Calu3 (cell line): ENCODE measurements at regions of chr4 and their contacts with region 1.

Region 1: DNA sequence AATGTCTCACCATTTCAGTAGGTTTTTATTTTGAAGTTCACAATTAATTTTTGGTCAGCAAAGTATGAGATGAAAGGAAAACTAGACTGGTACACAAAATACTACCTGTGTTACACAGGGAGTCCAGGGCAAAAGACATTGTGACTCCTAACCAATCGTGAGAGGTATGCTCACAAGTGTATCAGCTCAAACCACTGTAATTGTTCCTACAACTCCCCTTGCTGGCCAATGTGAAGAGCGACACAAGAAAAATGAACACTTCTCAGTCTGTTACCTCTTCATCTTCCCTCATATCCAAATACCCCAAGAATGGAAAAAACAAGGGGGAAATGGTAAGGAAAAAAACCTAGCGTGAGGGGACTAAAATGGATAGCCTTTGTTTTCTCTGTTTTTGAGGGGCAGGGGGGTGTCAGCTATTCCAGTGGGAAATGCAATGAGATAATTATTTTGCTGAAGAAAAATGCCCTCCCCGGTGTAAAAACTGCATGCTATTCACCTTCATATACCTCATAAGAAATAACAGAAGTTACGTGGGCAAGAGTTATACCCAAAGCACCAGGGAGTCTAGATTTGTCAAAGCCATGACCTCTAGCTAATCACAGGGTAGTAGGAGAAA is 30.6 kb upstream of the NSUN7 start:
- DNase-seq: peak; percentile 27
- H3K4me3 Mint-ChIP-seq: no peak overlapping the region
- H3K27ac Mint-ChIP-seq: peak overlapping the region; percentile 50
- H3K4me1 Mint-ChIP-seq: peaks cover 17% of the 10 kb centered on the region
- H3K27me3 Mint-ChIP-seq: no peaks in the 10 kb centered on the region
- CTCF ChIP-seq: peak; percentile 19

Region 2: DNA sequence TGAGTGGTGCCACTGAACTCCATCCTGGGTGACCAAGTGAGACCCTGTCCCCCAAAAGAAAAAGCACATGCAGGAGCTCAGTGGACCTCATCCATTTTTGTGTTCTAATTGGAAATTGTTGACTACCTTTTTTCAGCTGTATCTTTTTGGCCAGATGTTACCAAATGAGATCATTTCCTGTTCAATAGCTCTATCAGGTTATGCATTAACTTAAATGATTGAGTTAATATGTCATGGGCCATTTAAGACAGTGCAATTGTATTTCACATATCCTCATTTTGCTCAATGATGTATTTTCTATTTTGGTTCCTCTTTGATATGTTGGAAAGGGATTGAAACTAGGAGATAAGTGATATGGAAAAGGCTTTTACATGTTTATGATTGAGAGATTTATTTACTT is 548.5 kb before region 1 on chr4:
- CTCF ChIA-PET with region 1: interaction called, 11 read pairs
- intact Hi-C with region 1: no loop called
- DNase-seq: no peak
- H3K4me3 Mint-ChIP-seq: no peak overlapping the region
- H3K27ac Mint-ChIP-seq: no peak overlapping the region
- H3K4me1 Mint-ChIP-seq: no peaks in the 10 kb centered on the region
- H3K27me3 Mint-ChIP-seq: no peaks in the 10 kb centered on the region
- CTCF ChIP-seq: no peak

Region 3: GRCh38 chr4:40395908-40396793 is 323.0 kb before region 1 on chr4:
- CTCF ChIA-PET with region 1: no interaction called
- intact Hi-C with region 1: no loop called
- DNase-seq: peak; percentile 60
- H3K4me3 Mint-ChIP-seq: no peak overlapping the region
- H3K27ac Mint-ChIP-seq: no peak overlapping the region
- H3K4me1 Mint-ChIP-seq: peaks cover 10% of the 10 kb centered on the region
- H3K27me3 Mint-ChIP-seq: no peaks in the 10 kb centered on the region
- CTCF ChIP-seq: no peak

Region 4: GRCh38 chr4:40486534-40486933 is 232.6 kb before region 1 on chr4:
- CTCF ChIA-PET with region 1: no interaction called
- intact Hi-C with region 1: no loop called
- DNase-seq: no peak
- H3K4me3 Mint-ChIP-seq: no peak overlapping the region
- H3K27ac Mint-ChIP-seq: no peak overlapping the region
- H3K4me1 Mint-ChIP-seq: peaks cover 52% of the 10 kb centered on the region
- H3K27me3 Mint-ChIP-seq: no peaks in the 10 kb centered on the region
- CTCF ChIP-seq: no peak

Region 5: GRCh38 chr4:40524366-40525041 is 194.6 kb before region 1 on chr4:
- CTCF ChIA-PET with region 1: interaction called, 12 read pairs
- intact Hi-C with region 1: no loop called
- DNase-seq: no peak
- H3K4me3 Mint-ChIP-seq: no peak overlapping the region
- H3K27ac Mint-ChIP-seq: no peak overlapping the region
- H3K4me1 Mint-ChIP-seq: peaks cover 13% of the 10 kb centered on the region
- H3K27me3 Mint-ChIP-seq: no peaks in the 10 kb centered on the region
- CTCF ChIP-seq: no peak

Region 6: DNA sequence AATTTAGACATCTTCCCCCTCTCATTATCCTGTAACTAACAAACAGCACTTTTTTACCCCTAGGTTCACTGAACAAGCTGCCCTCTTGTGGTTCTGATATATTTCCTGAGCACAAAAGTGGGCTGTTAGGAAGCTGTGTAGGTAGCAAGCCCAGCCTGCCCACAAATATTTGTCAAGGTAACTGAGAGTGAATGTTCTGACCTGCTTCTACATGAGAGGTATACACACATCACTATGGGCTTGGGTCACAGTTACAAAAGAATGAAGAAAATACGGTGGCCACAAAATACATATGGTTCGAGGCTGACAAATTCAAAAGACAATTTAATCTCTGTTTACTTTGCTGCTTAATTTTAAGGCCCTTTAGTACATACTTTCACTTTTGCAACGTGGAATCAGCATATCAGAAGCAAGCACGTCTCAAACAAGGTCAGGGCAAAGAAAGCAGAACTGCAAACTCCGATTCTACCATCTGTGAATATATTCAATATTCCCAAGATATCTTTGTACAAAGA is 168.1 kb before region 1 on chr4:
- CTCF ChIA-PET with region 1: no interaction called
- intact Hi-C with region 1: loop called (anchors 10 kb)
- DNase-seq: peak; percentile 17
- H3K4me3 Mint-ChIP-seq: peak overlapping the region; percentile 59
- H3K27ac Mint-ChIP-seq: no peak overlapping the region
- H3K4me1 Mint-ChIP-seq: peaks cover 36% of the 10 kb centered on the region
- H3K27me3 Mint-ChIP-seq: no peaks in the 10 kb centered on the region
- CTCF ChIP-seq: no peak

Region 7: GRCh38 chr4:40586020-40586419 is 133.1 kb before region 1 on chr4:
- CTCF ChIA-PET with region 1: interaction called, 10 read pairs
- intact Hi-C with region 1: no loop called
- DNase-seq: no peak
- H3K4me3 Mint-ChIP-seq: no peak overlapping the region
- H3K27ac Mint-ChIP-seq: peak overlapping the region; percentile 31
- H3K4me1 Mint-ChIP-seq: peaks cover 40% of the 10 kb centered on the region
- H3K27me3 Mint-ChIP-seq: no peaks in the 10 kb centered on the region
- CTCF ChIP-seq: no peak

Region 8: DNA sequence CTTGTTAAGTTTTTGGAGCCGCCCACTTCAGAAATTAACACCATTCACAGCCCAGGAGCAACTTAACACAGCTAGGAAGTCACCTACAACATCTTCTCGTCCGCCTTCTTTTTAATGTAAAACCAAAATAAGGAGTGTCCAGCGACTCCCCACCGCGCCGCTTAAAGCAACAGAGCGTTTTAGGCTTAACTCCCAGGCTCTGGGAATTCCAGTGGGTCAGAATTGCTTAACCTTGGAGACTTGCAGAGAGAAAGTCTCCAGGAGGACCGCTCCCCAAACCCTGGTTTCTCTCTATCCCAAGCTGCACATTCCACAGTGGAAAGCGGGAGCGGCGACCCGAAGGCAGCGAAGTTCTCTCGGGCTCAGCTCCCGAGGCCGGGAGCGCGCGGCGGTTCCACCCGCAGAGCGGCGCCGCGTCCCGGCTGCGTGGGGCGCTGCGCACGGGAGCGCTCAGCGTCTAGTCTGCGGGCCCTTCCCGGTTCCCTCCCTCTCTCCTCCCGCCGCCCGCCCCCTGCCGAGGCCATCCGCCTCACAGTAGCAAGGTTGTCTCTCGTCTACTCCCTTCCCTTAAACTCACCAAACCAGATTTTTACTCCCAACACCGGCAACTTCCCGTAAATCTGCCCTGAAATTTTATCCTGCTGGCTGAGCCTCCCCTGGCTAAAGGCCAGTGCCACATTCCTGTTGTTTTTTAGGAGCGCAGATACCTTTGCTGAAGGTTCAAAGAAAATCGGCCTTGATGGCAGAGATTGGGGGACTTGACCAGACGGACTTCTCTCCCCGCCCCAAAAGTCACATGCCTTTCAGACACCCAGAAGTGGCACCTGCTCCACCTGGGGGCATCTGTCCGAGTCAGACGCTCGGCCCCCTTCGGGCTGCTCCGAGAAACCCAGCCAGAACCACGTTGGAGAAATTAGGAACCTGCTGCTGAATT is 89.4 kb before region 1 on chr4 and contains the start of gene RBM47:
- CTCF ChIA-PET with region 1: interaction called, 3 read pairs
- intact Hi-C with region 1: loop called (anchors 2 kb)
- DNase-seq: peak; percentile 78
- H3K4me3 Mint-ChIP-seq: peak within 1 kb of the TSS; percentile 94
- H3K27ac Mint-ChIP-seq: peak within 1 kb of the TSS; percentile 98
- H3K4me1 Mint-ChIP-seq: peaks cover 21% of the 10 kb centered on the region
- H3K27me3 Mint-ChIP-seq: no peaks in the 10 kb centered on the region
- CTCF ChIP-seq: no peak
- total RNA-seq, gene RBM47: 86.6 and 106 TPM in 2 replicates

Region 9: DNA sequence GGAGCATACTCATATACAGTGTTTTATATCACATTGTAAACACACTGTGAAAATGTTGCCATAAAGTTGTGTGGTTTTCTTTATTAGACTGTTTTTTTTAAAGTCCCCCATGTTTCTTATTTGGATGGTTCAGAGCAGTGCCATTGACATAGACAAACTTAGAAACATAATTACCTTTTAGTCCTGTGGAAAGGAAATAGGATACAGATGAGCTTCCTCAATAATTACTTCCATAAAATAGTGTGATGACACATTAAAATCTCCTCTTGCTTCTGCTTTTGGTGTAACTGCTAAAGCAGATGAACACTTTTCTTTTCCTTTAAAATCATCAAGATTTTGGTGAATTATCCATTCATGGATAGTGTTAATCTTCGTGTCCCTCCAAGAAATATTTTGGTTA is 765.9 kb after region 1 on chr4:
- CTCF ChIA-PET with region 1: no interaction called
- intact Hi-C with region 1: no loop called
- DNase-seq: no peak
- H3K4me3 Mint-ChIP-seq: no peak overlapping the region
- H3K27ac Mint-ChIP-seq: no peak overlapping the region
- H3K4me1 Mint-ChIP-seq: peaks cover 10% of the 10 kb centered on the region
- H3K27me3 Mint-ChIP-seq: no peaks in the 10 kb centered on the region
- CTCF ChIP-seq: no peak